Endothelial cell of umbilical vein (primary cell): ENCODE measurements at regions of chr1 and their contacts with region 1.

Region 1: GRCh38 chr1:94329986-94330385 is 88.2 kb upstream of the ABCD3 start:
- DNase-seq: peak; percentile 76
- H3K4me3 ChIP-seq: no peak overlapping the region
- H3K27ac ChIP-seq: peak overlapping the region; percentile 26
- H3K4me1 ChIP-seq: peaks cover 50% of the 10 kb centered on the region
- H3K27me3 ChIP-seq: no peaks in the 10 kb centered on the region
- CTCF ChIP-seq: peak; percentile 65 to 70
- POLR2A ChIP-seq: no peak

Region 2: GRCh38 chr1:94039514-94039870 is 290.5 kb before region 1 on chr1:
- CTCF ChIA-PET with region 1: interaction called, 1,439 read pairs
- POLR2A ChIA-PET with region 1: interaction called, 7 read pairs
- dilution Hi-C with region 1: no loop called
- intact Hi-C with region 1: loop called (anchors 1 kb)
- DNase-seq: peak; percentile 88
- H3K4me3 ChIP-seq: no peak overlapping the region
- H3K27ac ChIP-seq: peak overlapping the region; percentile 98
- H3K4me1 ChIP-seq: peaks cover 43% of the 10 kb centered on the region
- H3K27me3 ChIP-seq: no peaks in the 10 kb centered on the region
- CTCF ChIP-seq: peak; percentile 86 to 97
- POLR2A ChIP-seq: no peak

Region 3: GRCh38 chr1:94095112-94095637 is 234.8 kb before region 1 on chr1:
- CTCF ChIA-PET with region 1: interaction called, 4 read pairs
- POLR2A ChIA-PET with region 1: no interaction called
- dilution Hi-C with region 1: no loop called
- intact Hi-C with region 1: loop called (anchors 1 kb)
- DNase-seq: peak; percentile 97
- H3K4me3 ChIP-seq: no peak overlapping the region
- H3K27ac ChIP-seq: peak overlapping the region; percentile 91
- H3K4me1 ChIP-seq: peaks cover 56% of the 10 kb centered on the region
- H3K27me3 ChIP-seq: no peaks in the 10 kb centered on the region
- CTCF ChIP-seq: no peak
- POLR2A ChIP-seq: peak; percentile 5

Region 4: DNA sequence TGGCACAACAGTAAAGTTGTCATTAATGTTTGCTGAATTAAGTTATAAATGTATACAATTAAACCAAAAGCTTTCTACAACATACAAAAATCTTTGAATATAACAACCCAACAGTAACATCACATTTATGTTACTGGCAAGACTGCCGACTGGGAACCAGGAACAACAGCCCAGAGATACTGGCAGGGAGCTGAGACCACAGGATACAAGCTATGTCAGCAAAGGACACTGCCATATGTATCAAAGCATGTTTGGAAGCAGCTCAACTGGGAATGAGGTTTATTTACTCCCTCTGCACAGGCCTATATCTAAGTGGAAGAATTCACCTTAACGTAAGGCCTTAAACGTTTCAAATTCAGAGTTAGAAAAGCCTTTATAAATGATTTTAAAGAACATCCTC is 143.0 kb before region 1 on chr1:
- CTCF ChIA-PET with region 1: interaction called, 41 read pairs
- POLR2A ChIA-PET with region 1: no interaction called
- dilution Hi-C with region 1: no loop called
- intact Hi-C with region 1: loop called (anchors 5 kb)
- DNase-seq: no peak
- H3K4me3 ChIP-seq: no peak overlapping the region
- H3K27ac ChIP-seq: peak overlapping the region; percentile 5
- H3K4me1 ChIP-seq: peaks cover 25% of the 10 kb centered on the region
- H3K27me3 ChIP-seq: no peaks in the 10 kb centered on the region
- CTCF ChIP-seq: no peak
- POLR2A ChIP-seq: no peak

Region 5: DNA sequence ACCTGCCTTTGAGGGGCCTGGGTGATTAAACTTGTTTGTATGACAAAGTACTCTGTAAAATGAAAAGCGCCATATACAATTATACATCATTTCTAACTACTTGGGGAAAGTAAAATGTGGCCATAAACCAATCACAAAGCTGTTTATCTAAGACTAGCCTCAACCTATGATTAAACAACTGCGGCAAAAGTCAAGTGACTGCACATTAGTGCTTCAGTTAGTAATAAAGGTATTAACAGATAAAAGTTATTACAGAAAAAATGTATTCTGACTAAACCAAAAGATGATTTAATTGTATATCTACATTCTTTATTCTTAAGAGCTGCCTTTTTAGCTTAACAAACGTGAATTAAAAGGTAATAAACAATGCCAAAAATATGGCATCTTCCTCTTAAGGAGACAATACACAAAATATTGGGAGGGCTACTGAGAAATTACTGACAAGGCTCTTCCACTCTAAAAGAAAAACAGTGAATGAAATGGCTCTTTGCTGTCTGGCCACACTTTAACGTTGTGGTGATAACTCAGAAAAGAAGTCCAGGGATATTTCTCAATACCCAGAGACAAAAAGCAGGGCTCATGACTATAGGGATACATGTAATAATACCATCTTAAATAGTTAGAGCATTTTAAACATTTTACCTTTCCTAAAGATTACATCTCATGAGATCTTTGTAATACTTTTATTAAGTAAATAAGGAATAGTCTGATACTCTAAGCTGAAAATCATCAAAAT is 101.2 kb before region 1 on chr1:
- CTCF ChIA-PET with region 1: interaction called, 91 read pairs
- POLR2A ChIA-PET with region 1: interaction called, 9 read pairs
- dilution Hi-C with region 1: no loop called
- intact Hi-C with region 1: no loop called
- DNase-seq: no peak
- H3K4me3 ChIP-seq: peak overlapping the region in 1 of 3 experiments; percentile 12
- H3K27ac ChIP-seq: no peak overlapping the region
- H3K4me1 ChIP-seq: peaks cover 71% of the 10 kb centered on the region
- H3K27me3 ChIP-seq: no peaks in the 10 kb centered on the region
- CTCF ChIP-seq: no peak
- POLR2A ChIP-seq: no peak

Region 6: DNA sequence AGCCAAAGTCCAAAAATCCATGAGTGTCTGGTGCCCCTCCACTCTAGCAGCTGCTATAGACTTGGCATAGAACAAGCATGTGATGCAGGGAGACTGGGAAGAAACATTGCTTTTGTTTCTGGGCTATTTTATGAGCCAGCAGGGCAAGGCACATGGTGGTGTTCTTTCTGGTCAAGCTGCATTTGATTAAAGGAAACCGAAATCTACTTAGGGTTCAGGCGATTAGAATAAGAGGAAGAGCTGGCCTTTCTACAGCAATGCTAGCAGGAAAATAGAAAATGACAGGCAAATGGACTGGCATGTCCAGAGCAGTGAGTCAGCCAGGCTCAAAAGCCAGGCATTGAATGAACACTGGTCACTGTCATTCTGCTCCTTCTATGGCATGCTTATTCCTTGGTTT is 64.1 kb before region 1 on chr1:
- CTCF ChIA-PET with region 1: interaction called, 12 read pairs
- POLR2A ChIA-PET with region 1: interaction called, 9 read pairs
- dilution Hi-C with region 1: no loop called
- intact Hi-C with region 1: loop called (anchors 1 kb)
- DNase-seq: peak; percentile 77
- H3K4me3 ChIP-seq: no peak overlapping the region
- H3K27ac ChIP-seq: peak overlapping the region; percentile 61
- H3K4me1 ChIP-seq: peaks cover 37% of the 10 kb centered on the region
- H3K27me3 ChIP-seq: no peaks in the 10 kb centered on the region
- CTCF ChIP-seq: no peak
- POLR2A ChIP-seq: no peak

Region 7: GRCh38 chr1:94698759-94699502 is 368.9 kb after region 1 on chr1:
- CTCF ChIA-PET with region 1: no interaction called
- POLR2A ChIA-PET with region 1: no interaction called
- dilution Hi-C with region 1: no loop called
- intact Hi-C with region 1: no loop called
- DNase-seq: no peak
- H3K4me3 ChIP-seq: no peak overlapping the region
- H3K27ac ChIP-seq: no peak overlapping the region
- H3K4me1 ChIP-seq: no peaks in the 10 kb centered on the region
- H3K27me3 ChIP-seq: peaks cover 4 to 5% of the 10 kb centered on the region in 2 experiments
- CTCF ChIP-seq: no peak
- POLR2A ChIP-seq: no peak